WTC11 (cell line): ENCODE measurements at regions of chr19 and their contacts with region 1.

Region 1: GRCh38 chr19:4638828-4639530 is at the start of gene TNFAIP8L1:
- DNase-seq: peak; percentile 99
- ATAC-seq: peak; percentile 90
- H3K4me3 Mint-ChIP-seq: peak within 1 kb of the TSS; percentile 95
- H3K27ac Mint-ChIP-seq: peak within 1 kb of the TSS; percentile 41; the same call in 1 of the 2 replicates
- H3K4me1 Mint-ChIP-seq: peaks cover 16% of the 10 kb centered on the region
- H3K27me3 Mint-ChIP-seq: peaks cover 39% of the 10 kb centered on the region
- CTCF ChIP-seq: no peak
- total RNA-seq, gene TNFAIP8L1: 8.3 to 8.7 TPM (median 8.6 TPM) in 3 replicates

Region 2: GRCh38 chr19:4524808-4525562 is 114.0 kb before region 1 on chr19:
- CTCF ChIA-PET with region 1: interaction called, 85 read pairs
- POLR2A ChIA-PET with region 1: no interaction called
- DNase-seq: peak; percentile 87
- ATAC-seq: peak; percentile 82
- H3K4me3 Mint-ChIP-seq: no peak overlapping the region
- H3K27ac Mint-ChIP-seq: no peak overlapping the region
- H3K4me1 Mint-ChIP-seq: no peaks in the 10 kb centered on the region
- H3K27me3 Mint-ChIP-seq: peaks cover 35% of the 10 kb centered on the region
- CTCF ChIP-seq: peak; percentile 69; the same call in 1 of the 2 replicates

Region 3: GRCh38 chr19:4557971-4558941 is 80.7 kb before region 1 on chr19:
- CTCF ChIA-PET with region 1: interaction called, 28 read pairs
- POLR2A ChIA-PET with region 1: no interaction called
- DNase-seq: peak; percentile 78
- ATAC-seq: peak; percentile 12; the same call in 1 of the 2 replicates
- H3K4me3 Mint-ChIP-seq: no peak overlapping the region
- H3K27ac Mint-ChIP-seq: no peak overlapping the region
- H3K4me1 Mint-ChIP-seq: peaks cover 9% of the 10 kb centered on the region
- H3K27me3 Mint-ChIP-seq: peaks cover 2% of the 10 kb centered on the region; the same call in 1 of the 2 replicates
- CTCF ChIP-seq: peak; percentile 100

Region 4: GRCh38 chr19:4583961-4584669 is 54.9 kb before region 1 on chr19:
- CTCF ChIA-PET with region 1: interaction called, 22 read pairs
- POLR2A ChIA-PET with region 1: interaction called, 3 read pairs
- DNase-seq: peak; percentile 72
- ATAC-seq: peak; percentile 43
- H3K4me3 Mint-ChIP-seq: peak overlapping the region; percentile 68
- H3K27ac Mint-ChIP-seq: no peak overlapping the region
- H3K4me1 Mint-ChIP-seq: peaks cover 21% of the 10 kb centered on the region
- H3K27me3 Mint-ChIP-seq: peaks cover 54% of the 10 kb centered on the region
- CTCF ChIP-seq: no peak

Region 5: GRCh38 chr19:4597975-4598671 is 40.9 kb before region 1 on chr19:
- CTCF ChIA-PET with region 1: interaction called, 35 read pairs
- POLR2A ChIA-PET with region 1: no interaction called
- DNase-seq: peak; percentile 88
- ATAC-seq: peak; percentile 74
- H3K4me3 Mint-ChIP-seq: peak overlapping the region; percentile 80
- H3K27ac Mint-ChIP-seq: no peak overlapping the region
- H3K4me1 Mint-ChIP-seq: peaks cover 10% of the 10 kb centered on the region
- H3K27me3 Mint-ChIP-seq: peaks cover 67% of the 10 kb centered on the region
- CTCF ChIP-seq: no peak

Region 6: DNA sequence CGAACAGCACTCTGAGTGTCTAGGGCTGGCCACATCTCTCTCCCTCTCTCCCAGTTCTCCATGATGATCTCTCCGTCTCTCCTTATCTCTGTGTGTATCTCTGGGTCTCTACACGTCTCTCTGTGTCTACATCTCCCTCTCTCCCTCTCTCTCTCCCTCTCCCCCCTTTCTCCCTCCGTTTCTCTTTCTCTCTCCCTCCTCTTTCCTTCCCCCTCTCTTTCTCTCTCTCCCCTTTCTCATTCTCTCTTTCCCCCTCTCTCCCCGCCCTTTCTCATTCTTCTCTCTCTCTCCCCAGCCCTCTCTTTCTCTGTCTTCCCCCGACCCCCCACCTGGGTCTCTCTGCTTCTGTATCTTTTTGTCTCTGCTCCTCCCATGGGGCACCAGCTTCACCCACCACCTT is 21.0 kb before region 1 on chr19:
- CTCF ChIA-PET with region 1: interaction called, 46 read pairs
- POLR2A ChIA-PET with region 1: no interaction called
- DNase-seq: no peak
- ATAC-seq: no peak
- H3K4me3 Mint-ChIP-seq: no peak overlapping the region
- H3K27ac Mint-ChIP-seq: no peak overlapping the region
- H3K4me1 Mint-ChIP-seq: peaks cover 3% of the 10 kb centered on the region; the same call in 1 of the 2 replicates
- H3K27me3 Mint-ChIP-seq: peaks cover 28% of the 10 kb centered on the region
- CTCF ChIP-seq: no peak

Region 7: DNA sequence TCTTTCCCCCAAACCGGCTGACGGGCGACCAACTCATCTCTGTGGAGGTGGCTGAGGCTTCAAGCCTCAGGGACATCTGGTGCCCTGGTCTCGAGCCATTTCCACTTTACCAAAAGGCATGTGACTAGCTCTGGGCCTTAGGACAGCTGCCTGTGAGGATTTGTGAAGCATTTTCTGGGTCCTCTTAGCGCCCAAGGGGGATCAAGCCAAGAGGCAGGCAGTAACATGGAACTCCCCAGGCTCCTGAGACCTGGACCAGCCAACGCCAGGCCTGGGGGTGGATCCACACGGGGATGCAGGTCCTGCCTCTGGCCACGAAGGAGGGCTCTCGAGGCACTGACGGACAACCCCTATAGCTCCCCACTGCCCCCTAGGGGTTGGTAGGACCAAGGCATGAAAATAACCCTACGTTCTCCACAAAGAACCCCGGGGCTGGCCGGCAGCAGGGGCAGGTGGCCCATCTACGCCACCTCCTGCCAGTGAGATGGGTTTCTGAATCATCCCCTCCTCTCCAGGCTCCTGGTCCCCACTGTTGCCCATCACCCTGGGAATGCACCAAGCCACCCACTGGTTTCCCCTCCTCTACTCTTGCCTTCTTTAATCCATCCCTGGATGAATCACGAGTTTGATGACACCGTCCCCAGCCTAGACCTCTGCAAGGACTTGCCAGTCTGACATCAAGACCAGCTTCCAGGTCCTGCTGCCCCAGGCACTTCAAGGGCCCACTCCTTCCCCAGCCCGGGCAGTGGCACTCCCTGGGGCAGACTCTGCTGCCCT is 38.2 kb after region 1 on chr19:
- CTCF ChIA-PET with region 1: interaction called, 12 read pairs
- POLR2A ChIA-PET with region 1: no interaction called
- DNase-seq: peak; percentile 87
- ATAC-seq: peak; percentile 48
- H3K4me3 Mint-ChIP-seq: no peak overlapping the region
- H3K27ac Mint-ChIP-seq: peak overlapping the region; percentile 30; the same call in 1 of the 2 replicates
- H3K4me1 Mint-ChIP-seq: peaks cover 12% of the 10 kb centered on the region
- H3K27me3 Mint-ChIP-seq: no peaks in the 10 kb centered on the region
- CTCF ChIP-seq: peak; percentile 78

Region 8: DNA sequence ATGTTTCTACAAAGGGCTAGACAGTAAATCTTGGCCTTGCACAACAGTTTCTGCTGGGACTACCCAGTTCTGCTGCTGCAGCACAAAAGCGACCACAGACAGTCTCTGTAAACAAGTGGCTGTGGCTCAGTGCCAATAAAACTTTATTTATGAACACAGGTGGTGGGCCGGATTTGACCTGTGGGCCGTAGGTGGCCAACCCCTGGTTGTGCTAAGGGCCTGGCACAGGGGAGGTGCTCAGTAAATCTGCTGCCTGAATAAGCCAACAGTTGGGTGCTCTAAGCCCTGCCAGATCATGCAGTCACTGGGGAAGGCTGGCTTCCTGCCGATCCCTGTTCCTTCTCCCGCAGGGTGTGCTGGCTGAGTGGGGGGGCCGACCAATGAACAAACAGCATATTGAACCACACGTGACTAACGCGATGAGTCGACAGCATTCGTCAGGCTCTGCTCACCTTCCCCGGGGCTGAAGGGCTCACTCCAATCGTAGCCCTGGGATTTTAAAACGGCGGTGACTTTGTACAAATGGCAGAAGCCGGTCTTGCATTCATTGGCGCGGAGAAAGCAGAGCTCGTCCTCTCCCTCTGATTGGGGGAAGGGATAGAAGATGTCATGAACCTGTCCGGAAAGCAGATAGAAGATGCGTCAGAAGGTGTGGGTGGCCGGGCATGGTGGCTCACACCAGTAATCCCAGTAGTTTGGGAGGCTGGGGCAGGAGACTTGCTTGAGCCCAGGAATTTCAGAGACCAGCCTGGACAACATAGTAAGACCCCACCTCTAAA is 55.4 kb after region 1 on chr19:
- CTCF ChIA-PET with region 1: no interaction called
- POLR2A ChIA-PET with region 1: no interaction called
- DNase-seq: no peak
- ATAC-seq: no peak
- H3K4me3 Mint-ChIP-seq: no peak overlapping the region
- H3K27ac Mint-ChIP-seq: no peak overlapping the region
- H3K4me1 Mint-ChIP-seq: no peaks in the 10 kb centered on the region
- H3K27me3 Mint-ChIP-seq: no peaks in the 10 kb centered on the region
- CTCF ChIP-seq: no peak